PC-9 (cell line): ENCODE measurements at regions of chr7 and their contacts with region 1.

Region 1: DNA sequence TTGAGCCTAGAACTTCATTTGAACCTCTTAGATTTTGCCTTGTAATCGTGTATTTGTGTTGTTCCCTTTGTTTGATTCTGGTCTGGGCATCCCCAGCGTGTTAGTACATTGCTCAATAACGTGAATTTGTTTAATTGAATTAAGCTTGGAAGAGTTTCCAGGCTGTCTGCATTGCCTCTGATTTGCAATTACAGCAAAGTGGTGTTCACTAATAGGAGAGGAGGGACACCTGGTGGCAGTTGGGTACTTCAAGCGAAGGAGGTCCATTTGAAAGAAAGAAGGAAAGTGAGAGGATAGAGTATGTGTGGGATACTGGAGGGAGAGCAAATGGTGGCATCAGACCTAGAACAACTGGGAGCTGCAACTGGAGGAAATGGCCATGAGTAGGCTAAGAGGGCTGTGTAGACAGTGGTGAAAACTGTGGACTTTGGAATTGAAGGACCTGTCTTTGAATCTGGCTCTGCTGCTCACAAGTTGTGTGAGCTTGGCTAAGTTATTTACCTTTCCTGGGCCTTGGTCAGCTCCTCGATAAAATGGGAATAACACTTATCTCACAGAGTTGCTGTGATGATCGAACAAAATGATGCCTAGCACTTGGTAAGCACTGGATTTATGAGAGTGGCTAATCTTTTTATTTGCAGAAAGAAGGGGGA is 15.1 kb downstream of the LSMEM1 start:
- DNase-seq: peak; percentile 47 to 58
- H3K4me3 ChIP-seq: no peak overlapping the region
- H3K27ac ChIP-seq: no peak overlapping the region
- H3K4me1 ChIP-seq: no peaks in the 10 kb centered on the region
- H3K27me3 ChIP-seq: no peaks in the 10 kb centered on the region
- CTCF ChIP-seq: peak; percentile 80

Region 2: DNA sequence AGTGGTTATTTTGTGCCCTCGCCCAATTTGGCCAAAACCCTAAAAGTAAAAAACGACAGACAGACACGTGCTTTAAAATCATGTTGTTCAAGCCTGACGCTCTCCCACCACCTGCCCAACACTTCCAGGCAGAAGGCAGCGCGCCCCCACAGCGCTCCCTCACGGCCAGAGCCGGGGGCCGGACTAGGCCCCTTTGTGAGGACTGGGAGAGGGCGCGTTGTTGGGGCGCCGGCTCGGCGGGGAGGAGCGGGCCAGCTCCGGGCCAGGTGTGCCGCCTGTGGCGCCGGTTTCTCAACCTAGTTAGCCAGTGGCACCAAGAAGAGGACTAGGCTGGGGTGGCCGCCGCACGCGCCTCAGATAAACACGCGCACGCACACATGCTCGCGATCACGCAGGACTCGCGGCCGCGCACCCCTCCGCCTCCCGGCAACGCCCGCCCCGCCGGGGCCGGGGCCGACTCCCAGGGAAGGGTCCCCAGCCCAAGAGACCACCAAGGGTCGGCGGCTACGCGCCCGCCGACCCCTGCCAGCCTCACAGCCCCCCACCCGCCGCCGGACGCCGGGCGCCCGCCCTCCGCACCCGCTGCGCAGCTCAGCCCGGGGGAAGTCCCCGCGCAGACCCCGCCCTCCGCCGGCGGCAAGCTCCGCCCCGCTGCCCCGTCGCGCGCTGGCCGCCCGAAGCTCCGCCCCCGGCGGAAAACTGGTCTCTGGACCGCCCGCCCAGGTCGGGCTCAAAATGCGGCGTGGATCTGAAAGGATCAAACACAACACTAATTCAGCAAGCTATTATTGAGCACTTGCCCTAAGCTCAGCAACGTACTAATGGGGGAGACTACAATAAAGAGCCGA is 933.8 kb before region 1 on chr7 and contains the start of gene IMMP2L:
- CTCF ChIA-PET with region 1: no interaction called
- POLR2A ChIA-PET with region 1: no interaction called
- intact Hi-C with region 1: no loop called
- DNase-seq: peak; percentile 54 to 95
- H3K4me3 ChIP-seq: peak within 1 kb of the TSS; percentile 69
- H3K27ac ChIP-seq: peak within 1 kb of the TSS; percentile 61
- H3K4me1 ChIP-seq: peaks cover 20% of the 10 kb centered on the region
- H3K27me3 ChIP-seq: no peaks in the 10 kb centered on the region
- CTCF ChIP-seq: no peak; the same call in 1 of the 2 replicates
- total RNA-seq, gene IMMP2L: 40.5 and 51.0 TPM in 2 replicates

Region 3: GRCh38 chr7:111741811-111742240 is 754.1 kb before region 1 on chr7:
- CTCF ChIA-PET with region 1: no interaction called
- POLR2A ChIA-PET with region 1: no interaction called
- intact Hi-C with region 1: loop called (anchors 1 kb)
- DNase-seq: peak; percentile 44 to 56
- H3K4me3 ChIP-seq: no peak overlapping the region
- H3K27ac ChIP-seq: no peak overlapping the region
- H3K4me1 ChIP-seq: no peaks in the 10 kb centered on the region
- H3K27me3 ChIP-seq: no peaks in the 10 kb centered on the region
- CTCF ChIP-seq: peak; percentile 76

Region 4: GRCh38 chr7:111855161-111855856 is 640.6 kb before region 1 on chr7:
- CTCF ChIA-PET with region 1: interaction called, 3 read pairs
- POLR2A ChIA-PET with region 1: no interaction called
- intact Hi-C with region 1: loop called (anchors 10 kb)
- DNase-seq: peak in 1 of 2 experiments; percentile 28
- H3K4me3 ChIP-seq: no peak overlapping the region
- H3K27ac ChIP-seq: no peak overlapping the region
- H3K4me1 ChIP-seq: no peaks in the 10 kb centered on the region
- H3K27me3 ChIP-seq: no peaks in the 10 kb centered on the region
- CTCF ChIP-seq: peak; percentile 60

Region 5: GRCh38 chr7:112080441-112080840 is 415.5 kb before region 1 on chr7:
- CTCF ChIA-PET with region 1: no interaction called
- POLR2A ChIA-PET with region 1: no interaction called
- intact Hi-C with region 1: loop called (anchors 10 kb)
- DNase-seq: peak; percentile 35 to 45
- H3K4me3 ChIP-seq: no peak overlapping the region
- H3K27ac ChIP-seq: no peak overlapping the region
- H3K4me1 ChIP-seq: no peaks in the 10 kb centered on the region
- H3K27me3 ChIP-seq: no peaks in the 10 kb centered on the region
- CTCF ChIP-seq: no peak

Region 6: DNA sequence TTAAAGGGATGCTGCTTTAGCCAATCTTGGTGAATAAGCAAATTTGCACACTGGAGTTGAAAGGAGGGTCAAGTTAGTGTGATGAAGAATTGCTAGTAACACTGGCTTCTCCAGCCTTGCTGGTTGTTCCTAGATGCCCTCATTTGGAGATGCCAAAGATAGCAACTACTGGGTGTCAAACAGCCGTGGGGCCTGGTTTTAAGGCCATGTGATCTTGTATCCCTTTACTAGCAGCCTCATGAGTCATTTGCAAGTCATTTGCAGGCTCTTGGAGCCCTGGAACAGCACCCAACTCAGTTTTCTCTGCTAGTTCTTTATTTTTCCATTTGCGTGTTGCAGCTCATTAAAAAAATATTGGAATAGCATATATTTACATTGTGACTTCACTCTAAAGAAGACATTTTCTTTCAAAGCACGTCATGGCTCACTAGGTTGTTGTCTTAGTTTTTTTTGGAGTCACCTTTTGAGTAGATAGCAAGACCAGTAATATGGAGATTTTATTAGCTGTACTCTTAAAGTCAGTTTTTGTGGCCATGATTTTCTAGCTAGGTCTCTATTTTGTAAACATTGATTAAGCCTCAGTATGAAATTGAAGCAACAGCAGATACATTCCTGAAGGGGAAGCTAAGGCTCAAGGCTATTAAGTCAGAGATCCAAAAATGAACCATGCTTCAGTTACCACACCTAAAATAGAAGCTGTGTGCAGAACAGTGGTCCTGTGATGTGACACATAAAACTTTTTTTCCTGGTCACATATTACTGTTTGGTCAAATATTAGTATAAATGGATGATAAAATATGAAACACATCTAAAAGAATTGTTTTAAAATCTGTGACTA is 13.9 kb before region 1 on chr7:
- CTCF ChIA-PET with region 1: interaction called, 3 read pairs
- POLR2A ChIA-PET with region 1: no interaction called
- intact Hi-C with region 1: loop called (anchors 2 kb)
- DNase-seq: peak; percentile 83 to 93
- H3K4me3 ChIP-seq: no peak overlapping the region
- H3K27ac ChIP-seq: peak overlapping the region; percentile 48
- H3K4me1 ChIP-seq: peaks cover 35% of the 10 kb centered on the region
- H3K27me3 ChIP-seq: no peaks in the 10 kb centered on the region
- CTCF ChIP-seq: no peak

Region 7: DNA sequence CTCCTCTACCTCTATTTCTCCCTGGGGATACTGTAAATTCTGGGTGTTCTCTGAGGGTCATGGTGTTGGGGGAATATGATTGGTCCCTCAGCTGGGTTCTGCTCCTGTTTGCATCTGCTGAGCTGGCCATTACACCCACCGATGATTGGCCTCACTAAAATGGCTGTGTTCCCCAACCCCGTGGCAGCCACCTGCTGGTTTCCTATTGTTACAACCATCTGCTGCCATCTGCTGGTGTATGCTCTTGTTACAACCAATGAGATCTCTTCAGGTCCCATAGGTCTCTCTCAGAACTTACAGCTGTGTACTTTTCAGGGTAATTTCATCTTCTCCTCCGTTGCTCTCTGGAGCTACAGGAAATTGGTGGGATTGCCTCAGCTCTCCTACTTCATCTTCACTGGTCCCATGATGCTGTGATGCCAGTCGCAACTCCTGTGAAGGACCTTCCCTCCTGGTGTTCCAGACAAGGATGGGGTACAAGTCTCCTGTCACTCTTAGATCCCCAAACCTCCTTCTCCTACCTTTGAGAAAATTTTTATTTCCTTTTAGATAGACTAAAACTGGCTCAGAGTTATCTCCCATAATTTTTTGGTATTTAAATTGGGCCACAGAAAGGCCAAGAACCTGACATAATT is 925.9 kb after region 1 on chr7:
- CTCF ChIA-PET with region 1: no interaction called
- POLR2A ChIA-PET with region 1: no interaction called
- intact Hi-C with region 1: loop called (anchors 5 kb)
- DNase-seq: peak; percentile 63 to 65
- H3K4me3 ChIP-seq: no peak overlapping the region
- H3K27ac ChIP-seq: no peak overlapping the region
- H3K4me1 ChIP-seq: no peaks in the 10 kb centered on the region
- H3K27me3 ChIP-seq: no peaks in the 10 kb centered on the region
- CTCF ChIP-seq: peak; percentile 83